ENCODE measurements at regions of chr16 and their contacts with region 1.

Region 1: DNA sequence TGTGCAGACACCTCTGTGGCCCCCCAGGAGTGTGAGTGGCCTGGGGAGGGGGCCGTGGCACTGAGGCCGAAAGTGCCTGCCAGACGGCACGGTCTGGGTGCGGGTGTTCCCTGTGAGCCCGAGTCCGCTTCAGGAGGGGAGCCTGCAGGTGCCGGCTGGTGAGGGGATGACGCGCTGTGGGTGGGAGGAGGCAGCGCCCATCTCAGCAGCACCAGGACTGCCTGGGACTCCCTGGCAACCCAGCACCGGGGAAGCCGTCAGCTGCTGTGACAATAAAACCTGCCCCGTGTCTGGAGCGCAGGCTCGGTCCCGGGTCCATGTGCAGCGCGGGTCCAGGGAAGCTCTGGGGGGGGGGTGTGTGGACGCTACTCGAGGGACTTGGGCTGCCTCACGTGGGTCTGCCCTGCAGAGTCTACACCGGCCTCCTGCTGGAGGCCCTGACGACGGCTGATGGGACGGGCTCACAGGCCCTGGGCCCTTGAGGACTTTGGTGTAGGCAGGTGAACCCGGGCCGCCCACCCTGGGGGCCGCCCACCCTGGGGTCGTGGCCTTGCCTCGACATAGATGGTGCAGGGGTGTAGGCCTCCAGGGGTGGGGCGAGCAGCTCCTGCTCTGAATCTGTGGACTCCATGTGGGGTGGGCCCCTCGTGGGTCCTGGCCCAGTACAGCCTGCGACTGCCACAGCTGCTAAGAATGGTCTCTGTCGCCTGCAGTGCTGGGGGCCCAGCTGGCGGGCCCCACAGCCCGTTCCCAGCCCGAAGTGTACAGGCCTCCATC is 5.9 kb upstream of the RAB40C start:
- DNase-seq: peak; percentile 18
- ATAC-seq: no peak

Region 2: GRCh38 chr16:521381-522210 is 62.4 kb before region 1 on chr16:
- intact Hi-C with region 1: no loop called
- DNase-seq: no peak
- ATAC-seq: no peak

Region 3: GRCh38 chr16:667780-668518 is 83.9 kb after region 1 on chr16 and contains the start of gene RHOT2:
- intact Hi-C with region 1: loop called in 1 of 2 experiments (anchors 5 kb)
- DNase-seq: peak; percentile 95
- ATAC-seq: peak; percentile 92 to 97
- total RNA-seq, gene RHOT2: 73.8 to 106 TPM

Measured in left cardiac atrium (tissue), 4 donors.